Endothelial cell of umbilical vein (primary cell): ENCODE measurements at regions of chr7 and their contacts with region 1.

Region 1: DNA sequence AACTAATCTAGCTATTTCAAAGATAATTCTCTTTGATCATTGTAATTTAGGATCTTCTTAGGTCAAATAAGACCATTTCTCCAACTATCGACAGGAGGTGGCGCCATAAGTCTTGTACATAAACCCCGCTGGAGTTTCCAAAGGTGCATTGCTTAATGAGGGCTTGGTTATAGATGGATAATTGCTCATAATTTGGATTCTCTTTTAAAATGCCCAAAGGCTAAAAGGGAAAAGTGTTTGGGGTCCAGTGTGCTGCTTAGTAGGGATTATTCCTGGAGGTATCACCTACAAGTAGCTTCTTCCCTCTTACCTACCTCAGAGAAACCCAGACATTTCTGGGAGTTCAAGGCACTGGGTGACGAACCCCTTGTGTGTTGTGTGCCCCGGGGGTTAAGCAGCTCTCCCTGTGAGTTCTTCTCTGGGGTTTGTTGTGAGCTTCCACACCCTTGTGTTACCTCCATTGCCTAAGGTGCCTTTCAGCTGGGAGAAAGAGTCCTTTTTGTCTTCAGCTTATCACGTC is 75.2 kb downstream of the PAXIP1 start:
- DNase-seq: peak; percentile 86
- H3K4me3 ChIP-seq: peak overlapping the region; percentile 45 to 91 (median 89)
- H3K27ac ChIP-seq: peak overlapping the region; percentile 49
- H3K4me1 ChIP-seq: peaks cover 8% of the 10 kb centered on the region
- H3K27me3 ChIP-seq: peaks cover 0 to 5% of the 10 kb centered on the region in 2 experiments
- CTCF ChIP-seq: peak; percentile 45 to 53
- POLR2A ChIP-seq: no peak

Region 2: GRCh38 chr7:154913638-154914312 is 13.9 kb before region 1 on chr7:
- CTCF ChIA-PET with region 1: interaction called, 49 read pairs
- POLR2A ChIA-PET with region 1: no interaction called
- dilution Hi-C with region 1: no loop called
- intact Hi-C with region 1: no loop called
- DNase-seq: peak; percentile 67
- H3K4me3 ChIP-seq: peak overlapping the region in 2 of 3 experiments; percentile 1 to 27
- H3K27ac ChIP-seq: no peak overlapping the region
- H3K4me1 ChIP-seq: peaks cover 4% of the 10 kb centered on the region
- H3K27me3 ChIP-seq: peaks cover 0 to 11% of the 10 kb centered on the region in 2 experiments
- CTCF ChIP-seq: peak; percentile 82 to 94
- POLR2A ChIP-seq: no peak

Region 3: GRCh38 chr7:155009570-155010157 is 82.0 kb after region 1 on chr7:
- CTCF ChIA-PET with region 1: interaction called, 10 read pairs
- POLR2A ChIA-PET with region 1: no interaction called
- dilution Hi-C with region 1: no loop called
- intact Hi-C with region 1: loop called (anchors 2 kb)
- DNase-seq: peak; percentile 22
- H3K4me3 ChIP-seq: no peak overlapping the region
- H3K27ac ChIP-seq: no peak overlapping the region
- H3K4me1 ChIP-seq: no peaks in the 10 kb centered on the region
- H3K27me3 ChIP-seq: peaks cover 0 to 2% of the 10 kb centered on the region in 2 experiments
- CTCF ChIP-seq: peak; percentile 29 to 49
- POLR2A ChIP-seq: no peak

Region 4: GRCh38 chr7:155190688-155191087 is 263.0 kb after region 1 on chr7:
- CTCF ChIA-PET with region 1: interaction called, 6 read pairs
- POLR2A ChIA-PET with region 1: no interaction called
- dilution Hi-C with region 1: no loop called
- intact Hi-C with region 1: loop called (anchors 1 kb)
- DNase-seq: peak; percentile 20
- H3K4me3 ChIP-seq: no peak overlapping the region
- H3K27ac ChIP-seq: no peak overlapping the region
- H3K4me1 ChIP-seq: no peaks in the 10 kb centered on the region
- H3K27me3 ChIP-seq: peaks cover under 1 to 6% of the 10 kb centered on the region in 2 experiments
- CTCF ChIP-seq: peak; percentile 83 to 94
- POLR2A ChIP-seq: no peak

Region 5: DNA sequence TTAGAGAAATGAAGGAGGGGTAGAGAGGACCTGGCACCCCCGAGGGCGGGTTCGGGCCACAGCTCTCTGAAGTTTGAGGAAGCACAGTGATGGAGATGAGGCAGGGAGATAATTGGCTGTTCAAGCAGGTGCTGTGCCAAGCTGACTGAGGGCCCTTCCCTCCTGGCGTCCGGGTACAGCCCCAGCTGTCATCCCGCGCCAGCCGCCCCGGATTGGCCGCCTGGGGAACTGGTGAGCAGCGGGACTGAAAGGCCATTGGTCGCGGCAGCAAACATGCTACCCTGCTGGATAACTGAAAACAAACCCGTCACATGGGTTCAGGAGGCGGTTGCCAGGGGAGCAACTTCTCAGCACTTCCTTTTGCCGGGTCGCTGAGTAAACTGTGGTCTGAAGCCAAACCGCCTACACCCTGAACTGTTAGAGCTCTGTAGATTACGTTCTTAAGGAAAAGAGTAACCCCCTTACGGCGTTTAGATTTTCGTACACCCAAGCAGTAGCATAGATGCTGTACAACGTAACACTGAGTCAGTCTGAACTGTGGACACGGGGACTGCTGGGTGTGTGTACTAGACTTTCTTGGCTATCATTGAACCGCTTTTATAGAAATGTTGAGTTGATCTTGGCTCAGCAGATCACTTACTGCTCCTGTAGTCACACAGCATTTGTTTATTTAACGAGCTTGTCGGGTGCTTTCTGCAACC is 371.3 kb after region 1 on chr7:
- CTCF ChIA-PET with region 1: interaction called, 6 read pairs
- POLR2A ChIA-PET with region 1: interaction called, 4 read pairs
- dilution Hi-C with region 1: no loop called
- intact Hi-C with region 1: loop called (anchors 1 kb)
- DNase-seq: peak; percentile 96
- H3K4me3 ChIP-seq: peak overlapping the region; percentile 50 to 99 (median 91)
- H3K27ac ChIP-seq: peak overlapping the region; percentile 64
- H3K4me1 ChIP-seq: peaks cover 31% of the 10 kb centered on the region
- H3K27me3 ChIP-seq: no peaks in the 10 kb centered on the region
- CTCF ChIP-seq: no peak
- POLR2A ChIP-seq: peak; percentile 52

Region 6: GRCh38 chr7:155380221-155380861 is 452.7 kb after region 1 on chr7:
- CTCF ChIA-PET with region 1: interaction called, 15 read pairs
- POLR2A ChIA-PET with region 1: no interaction called
- dilution Hi-C with region 1: no loop called
- intact Hi-C with region 1: no loop called
- DNase-seq: peak; percentile 62
- H3K4me3 ChIP-seq: no peak overlapping the region
- H3K27ac ChIP-seq: no peak overlapping the region
- H3K4me1 ChIP-seq: no peaks in the 10 kb centered on the region
- H3K27me3 ChIP-seq: peaks cover 77 to 85% of the 10 kb centered on the region in 2 experiments
- CTCF ChIP-seq: peak; percentile 66 to 83
- POLR2A ChIP-seq: no peak